T-cell (primary cell): ENCODE measurements at regions of chr2 and their contacts with region 1.

Region 1: DNA sequence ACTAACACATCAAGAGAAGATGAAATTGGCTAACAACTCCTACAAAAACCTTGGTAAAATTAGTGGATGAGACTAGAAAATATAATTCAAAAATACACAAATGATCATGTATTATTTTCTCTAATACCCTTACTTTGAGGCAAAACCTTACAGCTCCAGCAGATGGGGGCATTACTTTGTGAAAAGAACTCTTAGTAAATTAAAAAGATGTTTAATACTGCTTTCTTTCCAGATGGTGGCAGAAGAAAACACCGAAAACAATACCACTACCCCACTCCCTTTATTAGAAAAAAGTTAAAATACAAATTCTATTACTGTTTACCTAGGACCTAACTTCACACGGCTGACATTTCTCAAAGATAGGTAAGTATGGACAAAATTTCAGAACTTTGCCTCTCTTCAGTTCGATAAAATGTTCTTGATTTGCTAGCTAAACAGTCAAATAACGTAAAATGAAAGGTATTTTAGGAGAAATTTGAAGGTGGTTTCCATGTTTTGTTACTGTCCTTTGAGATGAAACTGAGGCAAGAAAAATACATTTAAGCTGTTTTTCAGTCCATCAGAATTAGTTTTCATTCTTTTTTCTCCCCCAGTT is 30.6 kb downstream of the ORC4 start:
- DNase-seq: peak in 24 of 35 experiments; percentile 2 to 70 (median 19)
- ATAC-seq: peak; percentile 61 to 80 (median 66)
- H3K4me3 ChIP-seq: no peak overlapping the region
- H3K4me3 Mint-ChIP-seq: no peak overlapping the region
- H3K27ac ChIP-seq: no peak overlapping the region
- H3K27ac Mint-ChIP-seq: no peak overlapping the region
- H3K4me1 ChIP-seq: no peaks in the 10 kb centered on the region
- H3K4me1 Mint-ChIP-seq: peaks cover 20 to 40% (median 30%) of the 10 kb centered on the region in 3 donors
- H3K27me3 ChIP-seq: no peaks in the 10 kb centered on the region
- H3K27me3 Mint-ChIP-seq: no peaks in the 10 kb centered on the region

Region 2: DNA sequence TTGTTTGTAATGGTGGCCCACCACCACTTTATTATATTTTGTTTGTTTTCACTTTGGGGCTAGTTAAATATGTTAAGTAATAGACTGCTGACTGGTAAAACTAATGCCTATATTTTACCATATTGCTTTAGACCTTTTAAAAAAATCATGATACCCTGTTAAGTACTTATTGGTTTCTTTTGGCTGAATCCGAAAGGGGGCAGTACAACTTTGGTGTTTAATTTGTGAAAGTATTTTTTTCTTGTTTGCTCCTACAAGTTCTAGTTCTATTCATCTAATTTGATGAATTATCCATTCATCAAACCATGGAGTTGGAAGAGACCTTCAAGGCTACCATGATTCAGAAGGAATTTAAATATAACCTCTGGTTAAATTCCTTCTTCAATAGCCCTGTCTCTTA is 177.9 kb after region 1 on chr2:
- CTCF ChIA-PET with region 1: no interaction called
- POLR2A ChIA-PET with region 1: no interaction called
- DNase-seq: no peak
- ATAC-seq: no peak
- H3K4me3 ChIP-seq: no peak overlapping the region
- H3K4me3 Mint-ChIP-seq: no peak overlapping the region
- H3K27ac ChIP-seq: no peak overlapping the region
- H3K27ac Mint-ChIP-seq: no peak overlapping the region
- H3K4me1 ChIP-seq: no peaks in the 10 kb centered on the region
- H3K4me1 Mint-ChIP-seq: peaks cover 0 to 6% (median 2%) of the 10 kb centered on the region in 3 donors
- H3K27me3 ChIP-seq: no peaks in the 10 kb centered on the region
- H3K27me3 Mint-ChIP-seq: no peaks in the 10 kb centered on the region

Region 3: GRCh38 chr2:148989882-148990493 is 1000.1 kb after region 1 on chr2:
- CTCF ChIA-PET with region 1: interaction called, 18 to 22 read pairs
- POLR2A ChIA-PET with region 1: no interaction called
- DNase-seq: peak in 33 of 35 experiments; percentile 5 to 75 (median 42)
- ATAC-seq: peak; percentile 52 to 86 (median 79)
- H3K4me3 ChIP-seq: no peak overlapping the region
- H3K4me3 Mint-ChIP-seq: no peak overlapping the region
- H3K27ac ChIP-seq: no peak overlapping the region
- H3K27ac Mint-ChIP-seq: no peak overlapping the region
- H3K4me1 ChIP-seq: no peaks in the 10 kb centered on the region
- H3K4me1 Mint-ChIP-seq: peaks cover 2 to 6% (median 4%) of the 10 kb centered on the region in 3 donors
- H3K27me3 ChIP-seq: peaks cover 0 to 3% of the 10 kb centered on the region in 2 experiments
- H3K27me3 Mint-ChIP-seq: no peaks in the 10 kb centered on the region